ENCODE measurements at regions of chr17 and their contacts with region 1.

Region 1: GRCh38 chr17:78082988-78083387 is 45.6 kb downstream of the TMC6 start:
- DNase-seq: no peak
- H3K4me3 Mint-ChIP-seq: no peak overlapping the region
- H3K27ac Mint-ChIP-seq: no peak overlapping the region
- H3K4me1 Mint-ChIP-seq: no peaks in the 10 kb centered on the region
- H3K27me3 Mint-ChIP-seq: no peaks in the 10 kb centered on the region

Region 2: DNA sequence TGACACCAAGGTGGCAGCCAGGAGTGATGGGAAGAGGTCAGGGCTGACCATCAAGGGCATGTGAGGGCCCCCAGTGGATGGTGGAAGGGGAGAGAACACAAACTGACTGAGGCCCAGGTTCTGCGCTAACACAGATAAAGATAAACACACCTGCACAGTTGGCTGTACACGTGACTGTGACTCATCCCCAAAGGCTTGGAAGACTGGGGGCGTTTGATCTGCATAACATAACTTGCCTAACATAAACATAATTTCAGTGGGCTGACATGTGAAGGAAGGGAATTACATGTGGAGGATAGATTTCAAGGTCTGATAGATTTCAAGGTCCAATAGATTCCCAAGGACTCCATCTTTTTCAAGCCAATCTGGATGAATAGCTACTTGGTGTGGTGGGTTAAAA is 225.4 kb before region 1 on chr17:
- CTCF ChIA-PET with region 1: no interaction called
- POLR2A ChIA-PET with region 1: no interaction called
- intact Hi-C with region 1: no loop called
- DNase-seq: peak; percentile 43
- H3K4me3 Mint-ChIP-seq: no peak overlapping the region
- H3K27ac Mint-ChIP-seq: no peak overlapping the region
- H3K4me1 Mint-ChIP-seq: peaks cover 18% of the 10 kb centered on the region
- H3K27me3 Mint-ChIP-seq: no peaks in the 10 kb centered on the region

Region 3: GRCh38 chr17:78069695-78070094 is 13.3 kb before region 1 on chr17:
- CTCF ChIA-PET with region 1: interaction called, 13 read pairs
- POLR2A ChIA-PET with region 1: no interaction called
- intact Hi-C with region 1: no loop called
- DNase-seq: no peak
- H3K4me3 Mint-ChIP-seq: no peak overlapping the region
- H3K27ac Mint-ChIP-seq: no peak overlapping the region
- H3K4me1 Mint-ChIP-seq: peaks cover 1% of the 10 kb centered on the region
- H3K27me3 Mint-ChIP-seq: no peaks in the 10 kb centered on the region

Region 4: DNA sequence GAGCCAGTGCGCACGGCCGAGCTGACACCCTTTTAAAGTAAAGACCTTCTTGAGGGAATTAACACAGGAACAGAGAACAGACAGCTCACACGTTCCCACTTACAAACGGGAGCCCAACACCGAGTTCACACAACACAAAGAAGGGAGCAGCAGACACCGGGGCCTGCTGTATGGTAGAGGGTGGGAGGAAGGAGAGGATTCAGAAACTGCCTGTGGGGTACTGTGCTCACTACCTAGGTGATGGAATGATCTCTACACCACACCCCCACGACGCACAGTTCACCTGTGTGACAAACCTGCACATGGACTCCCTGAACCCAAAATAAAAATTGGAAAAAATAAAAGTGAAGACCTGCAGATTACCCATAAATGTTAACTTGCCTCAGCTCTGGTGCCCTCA is 13.1 kb after region 1 on chr17:
- CTCF ChIA-PET with region 1: interaction called, 10 read pairs
- POLR2A ChIA-PET with region 1: no interaction called
- intact Hi-C with region 1: no loop called
- DNase-seq: no peak
- H3K4me3 Mint-ChIP-seq: no peak overlapping the region
- H3K27ac Mint-ChIP-seq: no peak overlapping the region
- H3K4me1 Mint-ChIP-seq: no peaks in the 10 kb centered on the region
- H3K27me3 Mint-ChIP-seq: no peaks in the 10 kb centered on the region